Gastrocnemius medialis (tissue), 4 donors: ENCODE measurements at regions of chr3 and their contacts with region 1.

Region 1: DNA sequence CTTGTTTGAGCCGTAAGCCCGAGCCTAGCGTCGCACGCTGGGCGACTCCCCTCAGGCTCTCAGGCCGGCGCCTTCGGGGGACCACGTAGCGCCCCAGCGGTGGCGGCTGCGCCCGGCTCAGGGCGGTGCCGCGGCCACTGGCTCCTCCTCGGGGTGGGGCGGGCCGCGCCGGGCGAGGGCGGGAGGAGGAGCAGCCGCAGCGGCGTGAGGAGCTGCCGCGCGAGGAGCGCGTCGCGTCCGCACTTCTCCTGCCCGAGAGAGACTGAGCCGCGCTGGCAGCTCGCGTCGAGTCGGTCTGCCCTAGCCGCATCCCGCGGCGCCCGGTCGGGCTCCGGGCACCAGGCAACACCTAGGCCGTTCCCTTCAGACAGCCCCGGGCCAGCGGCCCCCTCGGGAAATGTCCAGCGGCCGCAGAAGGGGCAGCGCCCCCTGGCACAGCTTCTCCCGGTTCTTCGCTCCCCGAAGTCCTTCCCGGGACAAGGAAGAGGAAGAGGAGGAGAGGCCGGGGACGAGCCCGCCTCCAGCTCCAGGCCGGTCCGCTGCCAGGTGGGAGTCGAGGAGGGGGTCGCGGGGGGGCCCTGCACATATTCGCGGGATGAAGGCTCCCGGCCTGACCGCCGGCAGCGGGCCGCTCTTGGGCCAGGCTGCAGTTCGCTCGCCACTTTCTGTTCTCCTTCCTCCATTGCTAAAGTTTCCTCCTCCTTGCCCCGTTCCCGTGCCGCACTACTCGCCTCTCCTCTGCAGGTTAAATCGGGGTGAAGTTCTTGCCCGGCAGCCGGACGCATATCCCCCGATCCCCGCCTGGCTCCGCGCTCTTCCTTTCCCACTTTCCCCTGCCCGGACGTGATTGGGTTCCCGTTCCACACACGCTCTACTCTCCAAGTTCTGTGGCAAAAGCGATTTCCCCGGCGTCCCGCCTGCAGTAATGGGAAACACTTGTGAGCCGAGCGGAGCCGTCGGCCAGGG is at the start of gene CRYBG3:
- DNase-seq: peak; percentile 70 to 74
- ATAC-seq: peak; percentile 69 to 81
- H3K4me3 ChIP-seq: peak within 1 kb of the TSS; percentile 94 to 97 (median 96)
- H3K27ac ChIP-seq: peak within 1 kb of the TSS; percentile 89 to 97 (median 95)
- H3K4me1 ChIP-seq: peaks cover 39 to 40% of the 10 kb centered on the region in 2 donors
- H3K27me3 ChIP-seq: no peaks in the 10 kb centered on the region
- CTCF ChIP-seq: peak in 2 of 5 experiments; percentile 16 to 30
- POLR2A ChIP-seq: peak; percentile 88 to 93
- total RNA-seq, gene CRYBG3: 23.0 to 47.3 (median 24.8) TPM

Region 2: GRCh38 chr3:97764407-97765238 is 57.5 kb before region 1 on chr3 and contains the start of gene ARL6:
- in situ Hi-C with region 1: no loop called
- intact Hi-C with region 1: loop called (anchors 2 kb)
- DNase-seq: peak; percentile 55 to 71
- ATAC-seq: peak; percentile 98 to 99
- H3K4me3 ChIP-seq: peak within 1 kb of the TSS; percentile 84 to 97 (median 96)
- H3K27ac ChIP-seq: peak within 1 kb of the TSS; percentile 71 to 85 (median 78)
- H3K4me1 ChIP-seq: peaks cover 8 to 20% of the 10 kb centered on the region in 2 donors
- H3K27me3 ChIP-seq: no peaks in the 10 kb centered on the region
- CTCF ChIP-seq: no peak
- POLR2A ChIP-seq: no peak
- total RNA-seq, gene ARL6: 1.2 to 4.3 (median 3.2) TPM

Region 3: GRCh38 chr3:97957617-97958311 is 135.7 kb after region 1 on chr3:
- in situ Hi-C with region 1: no loop called
- intact Hi-C with region 1: loop called (anchors 5 kb)
- DNase-seq: peak; percentile 89
- ATAC-seq: peak; percentile 96 to 98
- H3K4me3 ChIP-seq: no peak overlapping the region
- H3K27ac ChIP-seq: peak overlapping the region; percentile 82 to 86 (median 84)
- H3K4me1 ChIP-seq: peaks cover 33 to 37% of the 10 kb centered on the region in 2 donors
- H3K27me3 ChIP-seq: no peaks in the 10 kb centered on the region
- CTCF ChIP-seq: no peak
- POLR2A ChIP-seq: peak in 1 of 2 donors; percentile 54

Region 4: DNA sequence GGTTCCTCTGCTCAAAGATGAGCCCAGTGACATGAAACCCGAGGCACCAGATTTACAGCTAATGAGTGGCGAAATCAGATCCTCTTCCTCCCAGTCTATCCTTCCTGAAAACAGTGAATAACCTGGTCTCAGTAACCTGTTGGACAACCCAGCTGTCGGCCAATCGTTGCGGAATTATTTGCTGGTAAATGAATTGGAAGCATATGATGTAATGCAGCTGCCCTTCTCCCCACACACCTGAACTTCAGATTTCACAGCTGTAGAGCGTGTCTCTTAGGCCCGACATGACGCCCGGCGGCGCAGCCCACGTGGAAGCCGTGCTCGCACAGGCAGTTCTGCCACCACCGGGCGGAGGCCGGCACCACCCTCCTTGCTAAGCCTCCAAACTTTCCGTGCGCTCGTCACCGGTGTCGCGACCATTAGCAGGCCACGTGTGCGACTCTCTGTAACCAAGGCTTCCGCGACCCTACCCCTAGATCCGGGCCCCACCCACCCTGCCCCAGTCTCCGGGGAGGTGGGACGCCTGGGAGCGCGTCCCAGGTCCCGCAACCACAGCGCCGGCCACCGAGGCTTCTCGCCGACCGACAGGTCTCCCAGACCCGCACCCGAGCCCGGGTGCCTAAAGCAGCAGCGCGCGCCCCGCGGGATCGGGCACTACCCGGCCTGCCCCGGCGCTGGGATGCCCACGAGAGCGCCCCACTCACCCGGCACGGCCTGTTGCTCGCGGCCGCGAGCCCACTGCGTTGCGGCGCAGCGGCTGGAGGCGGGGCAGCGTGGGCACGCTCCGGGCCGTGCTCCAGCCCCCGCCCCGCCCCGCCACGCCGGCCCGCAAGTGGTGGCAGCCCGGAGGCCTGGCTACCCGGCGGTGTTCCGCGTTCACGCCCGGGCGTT is 149.8 kb after region 1 on chr3 and contains the start of gene RIOX2:
- in situ Hi-C with region 1: no loop called
- intact Hi-C with region 1: loop called (anchors 2 kb)
- DNase-seq: peak; percentile 68 to 76
- ATAC-seq: peak; percentile 89 to 90
- H3K4me3 ChIP-seq: peak within 1 kb of the TSS; percentile 66 to 93 (median 82)
- H3K27ac ChIP-seq: peak within 1 kb of the TSS; percentile 91 to 99 (median 96)
- H3K4me1 ChIP-seq: peaks cover 21 to 28% of the 10 kb centered on the region in 2 donors
- H3K27me3 ChIP-seq: no peaks in the 10 kb centered on the region
- CTCF ChIP-seq: peak in 2 of 5 experiments; percentile 23 to 33
- POLR2A ChIP-seq: peak; percentile 89 to 94
- total RNA-seq, gene RIOX2: 27.4 to 57.3 (median 49.6) TPM